ENCODE measurements at regions of chr19 and their contacts with region 1.

Region 1: DNA sequence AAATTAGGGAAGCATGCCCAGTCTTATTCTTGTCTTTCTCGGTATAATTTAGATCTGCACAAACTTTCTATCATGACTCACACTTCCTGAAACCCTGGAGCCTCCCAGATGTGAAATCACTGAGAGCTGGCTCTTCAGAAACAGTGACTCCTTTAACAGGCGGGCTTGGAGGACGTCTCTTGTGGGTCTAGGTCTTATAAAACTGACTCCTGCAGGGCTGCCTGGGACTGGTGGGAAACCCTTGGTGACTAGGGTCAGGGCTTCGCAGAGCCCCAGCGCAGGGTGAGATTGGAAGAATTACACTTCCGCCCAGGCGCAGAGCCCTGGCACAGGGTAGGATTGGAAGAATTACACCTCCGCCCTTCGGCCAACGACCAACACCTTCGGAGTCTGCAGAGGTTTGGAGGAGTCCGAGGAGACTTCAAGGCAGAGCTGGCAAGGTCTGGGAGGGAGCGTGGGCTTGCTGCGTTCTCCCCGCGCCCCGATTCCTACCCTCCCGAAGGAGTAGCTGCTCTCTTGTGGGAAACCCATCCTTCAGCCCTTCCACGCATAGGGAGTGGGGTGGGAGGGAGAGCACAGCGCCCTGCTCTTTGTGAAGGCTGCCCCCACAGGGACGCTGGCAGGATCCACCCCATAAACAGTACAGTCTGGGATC is 43.4 kb upstream of the MAP3K10 start:
- DNase-seq: peak in 1 of 2 experiments; percentile 46
- ATAC-seq: peak; percentile 78 to 82
- H3K4me3 ChIP-seq: peak overlapping the region; percentile 23; the same call in 2 of the 3 replicates
- H3K27ac ChIP-seq: peak overlapping the region; percentile 20 to 67; a peak in 5 of 6 replicates
- H3K4me1 ChIP-seq: peaks cover 11% of the 10 kb centered on the region
- CTCF ChIP-seq: no peak
- EP300 ChIP-seq: no peak
- POLR2A ChIP-seq: no peak
- RAD21 ChIP-seq: no peak

Region 2: GRCh38 chr19:40165362-40165937 is 17.6 kb after region 1 on chr19:
- CTCF ChIA-PET with region 1: interaction called, 92 read pairs
- POLR2A ChIA-PET with region 1: no interaction called
- DNase-seq: peak in 1 of 2 experiments; percentile 77
- ATAC-seq: peak; percentile 71 to 83
- H3K4me3 ChIP-seq: no peak overlapping the region
- H3K27ac ChIP-seq: no peak overlapping the region
- H3K4me1 ChIP-seq: no peaks in the 10 kb centered on the region
- CTCF ChIP-seq: peak; percentile 61
- EP300 ChIP-seq: no peak
- POLR2A ChIP-seq: no peak
- RAD21 ChIP-seq: peak; percentile 53 to 64; a peak in 4 of 5 replicates

Measured in A549 (cell line).